ENCODE measurements at regions of chr21 and their contacts with region 1.

Region 1: DNA sequence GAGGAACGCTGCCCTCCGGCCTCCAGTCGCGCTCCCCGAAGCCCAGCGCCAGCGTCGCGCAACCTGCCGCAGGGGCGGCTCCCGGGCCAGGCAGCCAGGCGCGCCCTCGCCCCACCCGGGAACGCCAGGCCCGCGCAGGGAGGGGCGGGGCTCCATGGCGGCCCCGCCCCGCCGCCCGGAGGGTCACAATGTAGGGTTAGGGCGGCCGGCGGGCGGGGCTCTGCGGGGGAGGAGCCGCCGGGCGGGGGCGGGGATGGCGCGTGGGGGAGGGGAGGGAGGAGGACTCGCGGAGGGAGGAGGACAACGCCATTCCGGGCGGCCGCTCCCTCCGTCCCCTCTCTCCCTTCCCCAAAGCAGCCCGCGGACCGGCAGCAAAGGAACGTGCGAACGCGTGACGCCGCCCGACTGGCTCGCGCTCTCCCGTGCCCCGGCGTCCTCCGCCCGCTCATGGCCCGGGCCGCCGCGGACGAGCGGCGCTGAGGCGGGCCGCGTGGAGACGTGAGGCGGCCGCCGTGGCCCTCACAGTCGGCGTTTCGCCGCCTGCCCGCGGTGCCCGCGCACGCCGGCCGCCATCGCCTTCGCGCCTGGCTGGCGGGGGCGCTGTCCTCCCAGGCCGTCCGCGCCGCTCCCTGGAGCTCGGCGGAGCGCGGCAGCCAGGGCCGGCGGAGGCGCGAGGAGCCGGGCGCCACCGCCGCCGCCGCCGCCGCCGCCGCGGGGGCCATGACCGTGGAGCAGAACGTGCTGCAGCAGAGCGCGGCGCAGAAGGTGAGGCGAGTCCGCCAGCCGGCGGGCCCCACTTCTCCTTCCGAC is at the start of gene USP25:
- DNase-seq: peak; percentile 90
- H3K4me3 ChIP-seq: peak within 1 kb of the TSS; percentile 71 to 80
- H3K27ac ChIP-seq: peak within 1 kb of the TSS; percentile 92 to 95
- H3K4me1 ChIP-seq: no peaks in the 10 kb centered on the region
- H3K27me3 ChIP-seq: no peaks in the 10 kb centered on the region
- CTCF ChIP-seq: peak in 1 of 4 experiments; percentile 33
- POLR2A ChIP-seq: peak; percentile 70
- total RNA-seq, gene USP25: 30.4 to 49.3 TPM

Region 2: DNA sequence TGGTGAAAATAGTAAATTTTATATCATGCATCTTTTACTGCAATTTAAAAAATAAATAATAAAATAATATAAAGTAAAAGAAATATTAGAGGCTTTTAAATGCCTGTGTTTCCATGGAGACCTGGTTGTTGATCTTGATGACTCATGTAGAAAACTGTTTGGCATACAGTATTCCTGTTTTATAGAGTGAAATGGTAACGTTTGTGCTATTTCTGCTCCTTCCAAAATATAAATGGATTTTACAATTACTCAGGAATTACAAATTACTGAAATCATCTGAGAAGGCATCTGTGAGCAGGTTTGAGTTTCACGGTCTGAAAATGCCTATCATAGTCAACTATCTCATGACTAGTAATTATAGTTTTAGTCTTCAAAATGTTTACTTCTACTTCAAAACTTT is 98.5 kb before region 1 on chr21:
- intact Hi-C with region 1: no loop called
- DNase-seq: no peak
- H3K4me3 ChIP-seq: no peak overlapping the region
- H3K27ac ChIP-seq: no peak overlapping the region
- H3K4me1 ChIP-seq: no peaks in the 10 kb centered on the region
- H3K27me3 ChIP-seq: no peaks in the 10 kb centered on the region
- CTCF ChIP-seq: no peak
- POLR2A ChIP-seq: no peak

Region 3: GRCh38 chr21:15826147-15826780 is 96.4 kb after region 1 on chr21:
- intact Hi-C with region 1: loop called (anchors 10 kb)
- DNase-seq: peak; percentile 29
- H3K4me3 ChIP-seq: no peak overlapping the region
- H3K27ac ChIP-seq: no peak overlapping the region
- H3K4me1 ChIP-seq: no peaks in the 10 kb centered on the region
- H3K27me3 ChIP-seq: no peaks in the 10 kb centered on the region
- CTCF ChIP-seq: peak in 3 of 4 experiments; percentile 42 to 65 (median 57)
- POLR2A ChIP-seq: no peak

Region 4: GRCh38 chr21:16437586-16437985 is 707.7 kb after region 1 on chr21:
- intact Hi-C with region 1: no loop called
- DNase-seq: no peak
- H3K4me3 ChIP-seq: no peak overlapping the region
- H3K27ac ChIP-seq: no peak overlapping the region
- H3K4me1 ChIP-seq: no peaks in the 10 kb centered on the region
- H3K27me3 ChIP-seq: no peaks in the 10 kb centered on the region
- CTCF ChIP-seq: no peak
- POLR2A ChIP-seq: no peak

Region 5: GRCh38 chr21:16473988-16474387 is 744.1 kb after region 1 on chr21:
- intact Hi-C with region 1: no loop called
- DNase-seq: no peak
- H3K4me3 ChIP-seq: no peak overlapping the region
- H3K27ac ChIP-seq: no peak overlapping the region
- H3K4me1 ChIP-seq: no peaks in the 10 kb centered on the region
- H3K27me3 ChIP-seq: no peaks in the 10 kb centered on the region
- CTCF ChIP-seq: no peak
- POLR2A ChIP-seq: no peak